HEK293 (cell line): ENCODE measurements at regions of chr11 and their contacts with region 1.

Region 1: GRCh38 chr11:101436511-101437142 is 147.2 kb downstream of the TRPC6 start:
- H3K4me3 ChIP-seq: no peak overlapping the region
- H3K27ac ChIP-seq: no peak overlapping the region
- H3K4me1 ChIP-seq: no peaks in the 10 kb centered on the region
- CTCF ChIP-seq: no peak

Region 2: DNA sequence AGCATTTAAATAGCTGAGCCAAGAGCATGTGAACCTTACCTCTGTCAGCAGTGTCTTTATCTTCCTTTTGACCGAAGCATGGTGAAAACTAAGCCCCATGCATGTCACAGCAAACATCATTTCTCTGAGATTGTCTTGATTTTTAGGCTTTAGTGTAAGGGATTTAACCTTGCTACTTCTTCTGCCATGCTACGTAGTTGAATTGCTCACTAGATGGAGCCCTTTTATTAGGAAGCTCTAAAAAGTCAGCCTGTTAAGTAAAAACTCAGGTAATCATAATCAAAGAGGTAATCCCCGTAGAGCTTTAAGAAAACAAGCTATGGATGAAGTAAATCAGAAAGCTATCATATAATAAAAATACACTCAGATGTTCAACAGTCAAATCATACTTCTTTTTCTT is 456.5 kb before region 1 on chr11:
- CTCF ChIA-PET with region 1: interaction called, 20 read pairs
- POLR2A ChIA-PET with region 1: no interaction called
- H3K4me3 ChIP-seq: no peak overlapping the region
- H3K27ac ChIP-seq: no peak overlapping the region
- H3K4me1 ChIP-seq: no peaks in the 10 kb centered on the region
- CTCF ChIP-seq: no peak

Region 3: GRCh38 chr11:101306721-101307120 is 129.9 kb before region 1 on chr11:
- CTCF ChIA-PET with region 1: no interaction called
- POLR2A ChIA-PET with region 1: no interaction called
- H3K4me3 ChIP-seq: no peak overlapping the region
- H3K27ac ChIP-seq: no peak overlapping the region
- H3K4me1 ChIP-seq: no peaks in the 10 kb centered on the region
- CTCF ChIP-seq: no peak

Region 4: GRCh38 chr11:101346591-101346990 is 90.0 kb before region 1 on chr11:
- CTCF ChIA-PET with region 1: no interaction called
- POLR2A ChIA-PET with region 1: no interaction called
- H3K4me3 ChIP-seq: no peak overlapping the region
- H3K27ac ChIP-seq: no peak overlapping the region
- H3K4me1 ChIP-seq: no peaks in the 10 kb centered on the region
- CTCF ChIP-seq: no peak

Region 5: GRCh38 chr11:101390539-101390938 is 46.1 kb before region 1 on chr11:
- CTCF ChIA-PET with region 1: interaction called, 10 read pairs
- POLR2A ChIA-PET with region 1: no interaction called
- H3K4me3 ChIP-seq: no peak overlapping the region
- H3K27ac ChIP-seq: no peak overlapping the region
- H3K4me1 ChIP-seq: no peaks in the 10 kb centered on the region
- CTCF ChIP-seq: no peak